ENCODE measurements at regions of chr4 and their contacts with region 1.

Region 1: DNA sequence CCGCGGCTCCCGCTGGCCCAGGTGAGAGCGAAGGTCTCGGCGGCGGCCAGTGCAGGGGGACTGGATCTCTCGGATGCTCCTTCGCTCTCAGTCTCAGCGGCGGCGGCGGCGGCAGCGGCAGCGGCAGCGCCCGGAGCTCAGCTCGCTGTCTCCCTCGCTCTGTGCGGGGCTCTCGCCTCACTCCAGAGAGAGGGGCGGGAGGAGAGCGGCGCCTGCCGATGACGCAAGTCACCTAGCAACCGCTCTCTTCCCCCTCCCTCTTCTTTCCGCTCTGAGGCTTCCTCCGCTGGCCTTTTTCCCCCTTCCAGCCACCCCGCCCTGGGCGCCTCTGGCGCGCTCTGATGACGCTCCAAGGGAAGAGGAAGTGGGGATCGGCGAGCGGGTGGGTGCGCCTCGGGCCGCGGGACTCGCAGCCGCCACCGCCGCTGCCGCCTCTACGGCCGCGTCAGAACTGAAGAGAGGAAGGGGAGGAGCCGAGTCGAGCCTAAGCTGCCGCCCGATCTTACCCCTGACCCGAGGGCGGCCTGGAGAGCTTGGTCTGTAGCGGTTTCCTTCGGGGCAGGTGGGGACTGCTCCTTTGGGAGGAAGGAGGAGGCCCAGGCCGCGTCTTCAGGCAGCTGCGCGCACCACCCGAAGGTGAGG is at the start of gene FBXW7:
- DNase-seq: peak; percentile 99
- ATAC-seq: peak; percentile 87
- H3K4me3 Mint-ChIP-seq: peak within 1 kb of the TSS; percentile 82
- H3K27ac Mint-ChIP-seq: peak within 1 kb of the TSS; percentile 98
- H3K4me1 Mint-ChIP-seq: peaks cover 51% of the 10 kb centered on the region
- H3K27me3 Mint-ChIP-seq: no peaks in the 10 kb centered on the region
- total RNA-seq, gene FBXW7: 29.8 to 31.6 TPM

Region 2: GRCh38 chr4:151015459-151016347 is 1520.3 kb before region 1 on chr4:
- CTCF ChIA-PET with region 1: no interaction called
- POLR2A ChIA-PET with region 1: no interaction called
- intact Hi-C with region 1: loop called in 1 of 2 experiments (anchors 10 kb)
- DNase-seq: peak; percentile 89
- ATAC-seq: peak; percentile 81
- H3K4me3 Mint-ChIP-seq: peak overlapping the region; percentile 90
- H3K27ac Mint-ChIP-seq: peak overlapping the region; percentile 99
- H3K4me1 Mint-ChIP-seq: peaks cover 24% of the 10 kb centered on the region
- H3K27me3 Mint-ChIP-seq: no peaks in the 10 kb centered on the region

Region 3: DNA sequence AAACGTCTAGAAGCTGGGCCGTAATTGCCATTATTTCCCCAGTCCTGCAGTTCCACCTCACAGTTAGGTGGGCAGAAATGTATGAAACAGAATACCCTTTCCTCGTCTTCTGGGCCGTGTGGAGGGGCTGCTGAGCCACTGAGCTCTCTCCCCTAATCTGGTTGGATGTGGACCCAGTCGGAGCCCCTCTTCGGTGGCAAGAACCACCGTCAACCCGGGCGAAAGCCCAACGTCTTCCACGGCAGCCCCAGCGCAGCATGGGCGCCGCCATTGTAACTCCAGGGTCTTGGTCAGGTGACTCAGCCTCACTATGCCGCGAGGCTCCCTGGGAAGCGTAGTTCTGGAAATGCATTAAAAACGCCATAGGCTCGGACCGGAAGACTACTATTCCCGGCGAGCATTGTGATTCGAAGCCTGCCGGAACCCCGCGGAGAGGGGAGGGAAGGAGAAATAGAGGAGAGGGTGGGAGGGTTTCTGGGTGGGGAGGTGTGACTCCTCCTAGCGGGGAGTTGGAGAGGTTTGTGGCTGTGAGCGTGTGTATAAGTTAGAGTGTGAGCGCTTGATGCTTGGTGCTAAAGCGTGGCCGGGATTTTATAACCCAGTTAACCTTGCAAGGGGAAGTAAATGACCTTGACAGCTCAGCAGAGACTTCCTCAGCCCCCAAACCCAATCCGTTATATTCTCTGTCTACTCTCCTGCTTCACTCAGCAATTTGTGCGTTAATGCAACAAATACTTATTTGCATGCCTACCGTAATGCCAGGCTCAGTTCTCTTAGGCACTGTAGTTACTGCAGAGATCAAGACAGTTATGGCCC is 775.1 kb before region 1 on chr4 and contains the start of gene GATB:
- CTCF ChIA-PET with region 1: no interaction called
- POLR2A ChIA-PET with region 1: no interaction called
- intact Hi-C with region 1: loop called in 1 of 2 experiments (anchors 1 kb)
- DNase-seq: peak; percentile 95
- ATAC-seq: peak; percentile 100
- H3K4me3 Mint-ChIP-seq: peak within 1 kb of the TSS; percentile 100
- H3K27ac Mint-ChIP-seq: peak within 1 kb of the TSS; percentile 99
- H3K4me1 Mint-ChIP-seq: peaks cover 18% of the 10 kb centered on the region
- H3K27me3 Mint-ChIP-seq: no peaks in the 10 kb centered on the region
- total RNA-seq, gene GATB: 21.2 to 25.6 TPM

Region 4: DNA sequence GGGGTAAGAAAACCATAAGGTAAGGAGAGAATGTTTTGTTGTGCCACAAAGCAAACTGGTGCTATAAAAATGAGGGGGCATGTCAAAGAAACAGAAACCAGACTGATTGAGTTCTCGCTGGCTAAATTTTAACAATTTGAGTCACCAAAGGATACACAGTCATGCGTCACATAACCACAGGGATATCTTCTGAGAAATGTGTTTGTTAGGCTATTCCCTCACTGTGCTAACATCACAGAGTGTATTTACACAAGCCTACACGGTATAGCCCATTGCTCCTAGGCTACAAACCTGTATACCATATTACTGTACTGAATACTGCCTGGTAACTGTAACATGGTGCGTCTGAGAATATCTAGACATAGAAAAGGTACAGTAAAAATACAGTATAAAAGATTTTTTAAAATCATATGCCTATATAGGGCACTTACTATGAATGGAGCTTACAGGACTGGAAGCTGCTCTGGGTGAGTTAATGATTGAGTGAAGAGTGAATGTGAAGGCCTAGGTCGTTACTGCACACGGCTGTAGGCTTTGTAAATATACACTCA is 50.2 kb before region 1 on chr4:
- CTCF ChIA-PET with region 1: no interaction called
- POLR2A ChIA-PET with region 1: no interaction called
- intact Hi-C with region 1: loop called (anchors 1 to 2 kb)
- DNase-seq: peak; percentile 25
- ATAC-seq: peak; percentile 100
- H3K4me3 Mint-ChIP-seq: no peak overlapping the region
- H3K27ac Mint-ChIP-seq: no peak overlapping the region
- H3K4me1 Mint-ChIP-seq: peaks cover 43% of the 10 kb centered on the region
- H3K27me3 Mint-ChIP-seq: no peaks in the 10 kb centered on the region

Region 5: GRCh38 chr4:152651473-152652060 is 115.5 kb after region 1 on chr4:
- CTCF ChIA-PET with region 1: no interaction called
- POLR2A ChIA-PET with region 1: no interaction called
- intact Hi-C with region 1: no loop called
- DNase-seq: no peak
- ATAC-seq: peak; percentile 69
- H3K4me3 Mint-ChIP-seq: no peak overlapping the region
- H3K27ac Mint-ChIP-seq: no peak overlapping the region
- H3K4me1 Mint-ChIP-seq: peaks cover 8% of the 10 kb centered on the region
- H3K27me3 Mint-ChIP-seq: no peaks in the 10 kb centered on the region

Region 6: GRCh38 chr4:152679414-152680281 is 143.6 kb after region 1 on chr4 and contains the start of gene TMEM154:
- CTCF ChIA-PET with region 1: no interaction called
- POLR2A ChIA-PET with region 1: interaction called, 3 read pairs
- intact Hi-C with region 1: loop called in 1 of 2 experiments (anchors 2 kb)
- DNase-seq: peak; percentile 80
- ATAC-seq: peak; percentile 91
- H3K4me3 Mint-ChIP-seq: peak within 1 kb of the TSS; percentile 84
- H3K27ac Mint-ChIP-seq: peak within 1 kb of the TSS; percentile 85
- H3K4me1 Mint-ChIP-seq: peaks cover 53% of the 10 kb centered on the region
- H3K27me3 Mint-ChIP-seq: no peaks in the 10 kb centered on the region
- total RNA-seq, gene TMEM154: 15.2 to 21.2 TPM

Region 7: GRCh38 chr4:153115322-153116290 is 579.6 kb after region 1 on chr4:
- CTCF ChIA-PET with region 1: no interaction called
- POLR2A ChIA-PET with region 1: interaction called, 8 read pairs
- intact Hi-C with region 1: loop called in 1 of 2 experiments (anchors 10 kb)
- DNase-seq: peak; percentile 87
- ATAC-seq: peak; percentile 59
- H3K4me3 Mint-ChIP-seq: no peak overlapping the region
- H3K27ac Mint-ChIP-seq: no peak overlapping the region
- H3K4me1 Mint-ChIP-seq: peaks cover 2% of the 10 kb centered on the region
- H3K27me3 Mint-ChIP-seq: no peaks in the 10 kb centered on the region